ENCODE measurements at regions of chr11 and their contacts with region 1.

Region 1: DNA sequence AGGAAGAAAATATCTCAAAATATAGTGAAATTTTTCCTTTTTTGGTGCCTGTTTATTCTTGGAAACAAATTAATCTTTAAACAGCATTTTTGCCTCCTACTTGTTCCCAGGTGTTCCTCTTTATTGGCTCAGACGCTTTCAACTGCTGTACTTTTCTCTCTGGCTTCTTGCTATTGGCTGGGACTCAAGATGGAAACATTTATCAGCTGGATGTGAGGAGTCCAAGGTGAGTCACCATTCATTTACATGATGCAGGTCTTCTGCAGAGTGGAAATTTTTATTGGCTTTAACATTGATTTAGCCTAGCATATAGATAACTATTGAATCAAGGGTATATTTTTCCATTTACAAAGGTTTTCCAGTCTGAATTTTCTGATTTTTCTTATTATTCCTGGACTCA is 34.4 kb upstream of the DNAJB13 start:
- DNase-seq: no peak
- H3K4me3 ChIP-seq: no peak overlapping the region
- H3K27ac ChIP-seq: no peak overlapping the region
- H3K4me1 ChIP-seq: no peaks in the 10 kb centered on the region
- H3K27me3 ChIP-seq: no peaks in the 10 kb centered on the region
- CTCF ChIP-seq: no peak

Region 2: DNA sequence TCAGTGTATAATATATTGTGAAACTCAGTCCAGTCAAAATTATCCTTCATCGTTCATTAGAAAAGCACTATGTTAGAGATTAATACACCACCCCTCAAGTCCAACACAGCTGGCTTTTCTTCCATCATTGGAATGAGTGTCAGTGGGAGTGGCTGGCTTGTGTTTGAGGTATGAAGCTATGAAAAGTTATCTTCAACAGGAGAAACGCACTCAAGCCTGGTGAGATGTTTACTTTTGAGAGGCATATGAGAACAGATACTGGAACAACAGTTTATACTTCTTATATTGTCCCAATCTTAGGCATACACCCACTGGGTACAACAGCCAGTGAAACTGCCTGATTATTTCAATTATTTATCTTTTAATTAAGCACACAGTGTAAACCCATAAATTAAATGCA is 235.7 kb before region 1 on chr11:
- CTCF ChIA-PET with region 1: no interaction called
- POLR2A ChIA-PET with region 1: no interaction called
- intact Hi-C with region 1: loop called (anchors 10 kb)
- DNase-seq: no peak
- H3K4me3 ChIP-seq: no peak overlapping the region
- H3K27ac ChIP-seq: no peak overlapping the region
- H3K4me1 ChIP-seq: no peaks in the 10 kb centered on the region
- H3K27me3 ChIP-seq: no peaks in the 10 kb centered on the region
- CTCF ChIP-seq: no peak

Region 3: DNA sequence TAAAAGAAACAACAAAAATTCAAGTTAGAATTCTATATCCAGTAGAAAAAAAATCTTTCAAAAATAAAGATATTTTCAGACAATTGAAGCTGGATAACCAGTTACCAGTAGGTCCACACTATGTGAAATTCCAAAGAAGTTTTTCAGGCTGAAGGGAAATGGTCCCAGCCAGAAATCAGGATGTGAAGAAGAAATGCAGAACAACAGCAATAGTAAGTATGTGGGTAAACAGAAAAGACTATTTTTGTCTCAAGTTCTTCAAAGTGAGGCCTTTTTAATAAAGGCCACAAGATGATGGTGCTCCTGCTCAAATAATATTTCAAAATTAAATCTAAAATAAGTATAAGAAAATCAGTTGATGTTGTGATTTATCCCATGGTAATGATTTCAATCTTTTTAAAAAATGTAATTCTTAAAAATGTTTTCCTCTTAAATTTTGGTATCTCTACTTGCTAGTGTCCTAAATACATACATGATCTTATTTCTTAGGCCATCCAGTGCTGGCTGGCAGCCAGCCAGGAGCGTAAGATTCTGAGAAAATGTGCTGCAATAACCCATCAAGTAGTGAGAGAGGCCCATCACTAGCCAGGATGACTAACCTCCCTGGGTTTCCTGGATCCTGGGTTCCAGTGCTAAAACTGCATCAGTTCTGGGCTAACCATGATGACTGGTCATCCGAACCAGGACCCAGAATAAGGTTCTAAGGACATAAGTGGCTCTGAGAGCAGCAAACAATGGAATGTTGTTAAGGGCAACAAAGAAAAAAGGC is 108.0 kb after region 1 on chr11:
- CTCF ChIA-PET with region 1: no interaction called
- POLR2A ChIA-PET with region 1: no interaction called
- intact Hi-C with region 1: no loop called
- DNase-seq: no peak
- H3K4me3 ChIP-seq: no peak overlapping the region
- H3K27ac ChIP-seq: peak overlapping the region; percentile 68
- H3K4me1 ChIP-seq: peaks cover 52% of the 10 kb centered on the region
- H3K27me3 ChIP-seq: no peaks in the 10 kb centered on the region
- CTCF ChIP-seq: no peak

Measured in PC-9 (cell line).